ENCODE measurements at regions of chr17 and their contacts with region 1.

Region 1: GRCh38 chr17:68184816-68185436 is 62.9 kb upstream of the AMZ2 start:
- DNase-seq: no peak
- ATAC-seq: peak; percentile 69
- H3K4me3 Mint-ChIP-seq: peak overlapping the region; percentile 62
- H3K27ac Mint-ChIP-seq: peak overlapping the region; percentile 91
- H3K4me1 Mint-ChIP-seq: peaks cover 66% of the 10 kb centered on the region
- H3K27me3 Mint-ChIP-seq: no peaks in the 10 kb centered on the region
- CTCF ChIP-seq: no peak

Region 2: GRCh38 chr17:67836205-67836987 is 348.5 kb before region 1 on chr17:
- CTCF ChIA-PET with region 1: no interaction called
- POLR2A ChIA-PET with region 1: no interaction called
- intact Hi-C with region 1: no loop called
- DNase-seq: no peak
- ATAC-seq: no peak
- H3K4me3 Mint-ChIP-seq: no peak overlapping the region
- H3K27ac Mint-ChIP-seq: peak overlapping the region; percentile 71
- H3K4me1 Mint-ChIP-seq: peaks cover 76% of the 10 kb centered on the region
- H3K27me3 Mint-ChIP-seq: no peaks in the 10 kb centered on the region
- CTCF ChIP-seq: no peak

Region 3: GRCh38 chr17:68101075-68101992 is 83.6 kb before region 1 on chr17:
- CTCF ChIA-PET with region 1: no interaction called
- POLR2A ChIA-PET with region 1: no interaction called
- intact Hi-C with region 1: no loop called
- DNase-seq: peak; percentile 75
- ATAC-seq: peak; percentile 86
- H3K4me3 Mint-ChIP-seq: peak overlapping the region; percentile 93
- H3K27ac Mint-ChIP-seq: peak overlapping the region; percentile 85
- H3K4me1 Mint-ChIP-seq: peaks cover 31% of the 10 kb centered on the region
- H3K27me3 Mint-ChIP-seq: no peaks in the 10 kb centered on the region
- CTCF ChIP-seq: no peak

Region 4: DNA sequence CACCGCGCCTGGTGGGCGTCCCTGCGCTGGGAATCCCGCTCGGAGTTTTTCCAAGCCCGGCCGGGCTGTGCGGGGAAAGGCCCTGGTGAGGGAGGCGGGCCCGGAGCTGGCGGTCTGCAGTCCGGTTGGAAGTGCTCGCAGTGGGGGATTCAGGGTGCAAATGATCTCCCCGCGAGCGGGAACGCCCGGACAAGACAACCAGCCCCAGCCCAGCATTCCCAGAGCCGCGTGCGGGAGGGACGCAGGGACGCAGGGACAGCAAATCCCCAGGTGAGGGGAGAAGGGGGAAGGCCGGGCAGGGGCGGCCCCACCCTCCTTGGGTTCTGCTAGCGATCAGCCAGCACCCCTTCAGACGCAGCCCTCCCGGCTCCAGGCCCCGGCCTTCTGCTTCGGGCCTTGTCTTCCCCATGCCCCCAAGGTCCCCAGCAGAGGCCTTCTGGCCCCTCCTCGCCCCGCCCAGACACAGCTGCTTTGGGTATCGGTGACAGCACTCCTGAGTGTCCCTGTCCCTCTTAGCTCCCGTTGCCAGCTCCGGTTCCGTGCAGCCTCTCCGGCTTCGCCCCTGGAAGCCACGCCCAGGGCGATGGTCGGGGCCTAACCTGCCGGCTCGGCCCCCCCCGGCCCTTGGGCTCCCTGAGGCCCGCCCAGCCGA is 12.1 kb after region 1 on chr17:
- CTCF ChIA-PET with region 1: interaction called, 96 read pairs
- POLR2A ChIA-PET with region 1: interaction called, 192 read pairs
- intact Hi-C with region 1: loop called (anchors 1 kb)
- DNase-seq: peak; percentile 53
- ATAC-seq: peak; percentile 32
- H3K4me3 Mint-ChIP-seq: peak overlapping the region; percentile 78
- H3K27ac Mint-ChIP-seq: no peak overlapping the region
- H3K4me1 Mint-ChIP-seq: peaks cover 44% of the 10 kb centered on the region
- H3K27me3 Mint-ChIP-seq: peaks cover 10% of the 10 kb centered on the region
- CTCF ChIP-seq: no peak

Region 5: DNA sequence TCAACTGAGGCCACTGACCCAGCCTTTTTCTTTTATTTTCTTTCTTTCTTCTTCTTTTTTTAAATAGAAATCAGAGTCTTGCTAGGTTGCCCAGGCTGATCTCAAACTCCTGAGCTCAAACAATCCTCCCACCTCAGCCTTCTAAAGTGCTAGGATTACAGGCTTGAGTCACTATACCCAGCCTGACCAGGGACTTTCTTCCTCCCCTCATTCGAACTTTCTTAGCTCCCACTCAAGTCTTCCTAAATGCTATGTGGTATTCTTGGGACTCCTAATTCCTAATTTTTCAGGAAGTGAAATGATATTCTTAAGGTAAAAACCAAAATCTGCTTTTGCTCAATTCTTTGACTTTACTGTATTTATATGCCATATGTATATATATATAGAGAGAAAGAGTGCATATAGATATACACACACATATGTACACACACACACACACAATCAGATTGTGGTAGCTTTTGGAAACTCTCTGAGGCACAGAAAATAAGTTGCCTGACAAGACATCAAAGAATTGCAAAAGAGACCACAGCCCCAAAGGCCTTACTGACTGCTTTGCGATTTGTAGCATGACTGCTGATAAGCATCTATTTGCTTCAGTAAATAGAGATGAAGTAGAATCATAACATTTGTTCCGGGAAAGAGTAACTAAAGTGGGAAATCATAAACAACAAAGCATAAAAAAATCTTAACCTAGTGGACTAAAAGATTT is 53.4 kb after region 1 on chr17:
- CTCF ChIA-PET with region 1: no interaction called
- POLR2A ChIA-PET with region 1: interaction called, 24 read pairs
- intact Hi-C with region 1: no loop called
- DNase-seq: no peak
- ATAC-seq: no peak
- H3K4me3 Mint-ChIP-seq: peak overlapping the region; percentile 79
- H3K27ac Mint-ChIP-seq: peak overlapping the region; percentile 99
- H3K4me1 Mint-ChIP-seq: peaks cover 72% of the 10 kb centered on the region
- H3K27me3 Mint-ChIP-seq: no peaks in the 10 kb centered on the region
- CTCF ChIP-seq: no peak

Measured in activated B cell treated with CpG ODN at 0.5 μM for 24 hours (primary cell).